ENCODE measurements at regions of chr7 and their contacts with region 1.

Region 1: GRCh38 chr7:74401137-74401859 is 52.4 kb upstream of the GTF2IRD1 start:
- DNase-seq: peak; percentile 51 to 88
- H3K4me3 ChIP-seq: no peak overlapping the region
- H3K4me1 ChIP-seq: no peaks in the 10 kb centered on the region
- H3K27me3 ChIP-seq: no peaks in the 10 kb centered on the region

Region 2: DNA sequence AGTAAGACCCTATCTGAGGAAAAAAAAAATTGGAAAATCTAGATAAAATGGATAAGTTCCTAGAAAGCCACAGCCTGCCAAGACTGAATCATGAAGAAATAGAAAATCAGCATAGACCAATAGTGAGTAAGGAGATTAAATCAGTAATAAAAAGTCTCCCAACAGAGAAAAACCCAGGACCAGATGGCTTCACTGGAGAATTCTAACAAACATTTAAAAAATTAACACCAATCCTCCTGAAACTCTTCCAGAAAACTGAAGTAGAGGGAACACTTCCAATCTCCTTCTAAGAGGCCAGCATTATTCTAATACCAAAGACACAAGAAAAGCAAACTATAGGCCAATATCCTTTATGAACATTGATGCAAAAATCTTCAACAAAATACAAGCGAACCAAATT is 326.5 kb before region 1 on chr7:
- in situ Hi-C with region 1: loop called (anchors 5 kb)
- DNase-seq: no peak
- H3K4me3 ChIP-seq: no peak overlapping the region
- H3K4me1 ChIP-seq: peaks cover 3% of the 10 kb centered on the region; the same call in 1 of the 2 replicates
- H3K27me3 ChIP-seq: no peaks in the 10 kb centered on the region

Region 3: GRCh38 chr7:74206589-74207120 is 194.6 kb before region 1 on chr7:
- in situ Hi-C with region 1: loop called (anchors 5 kb)
- DNase-seq: peak; percentile 66 to 92
- H3K4me3 ChIP-seq: no peak overlapping the region
- H3K4me1 ChIP-seq: no peaks in the 10 kb centered on the region; the same call in 1 of the 2 replicates
- H3K27me3 ChIP-seq: no peaks in the 10 kb centered on the region

Region 4: GRCh38 chr7:74514131-74514591 is 112.9 kb after region 1 on chr7:
- in situ Hi-C with region 1: no loop called
- DNase-seq: no peak
- H3K4me3 ChIP-seq: no peak overlapping the region
- H3K4me1 ChIP-seq: no peaks in the 10 kb centered on the region
- H3K27me3 ChIP-seq: no peaks in the 10 kb centered on the region

Region 5: GRCh38 chr7:74606101-74606908 is 205.0 kb after region 1 on chr7:
- in situ Hi-C with region 1: no loop called
- DNase-seq: peak; percentile 10 to 60
- H3K4me3 ChIP-seq: peak overlapping the region; percentile 21
- H3K4me1 ChIP-seq: peaks cover 8% of the 10 kb centered on the region; the same call in 1 of the 2 replicates
- H3K27me3 ChIP-seq: no peaks in the 10 kb centered on the region